ENCODE measurements at regions of chr11 and their contacts with region 1.

Region 1: DNA sequence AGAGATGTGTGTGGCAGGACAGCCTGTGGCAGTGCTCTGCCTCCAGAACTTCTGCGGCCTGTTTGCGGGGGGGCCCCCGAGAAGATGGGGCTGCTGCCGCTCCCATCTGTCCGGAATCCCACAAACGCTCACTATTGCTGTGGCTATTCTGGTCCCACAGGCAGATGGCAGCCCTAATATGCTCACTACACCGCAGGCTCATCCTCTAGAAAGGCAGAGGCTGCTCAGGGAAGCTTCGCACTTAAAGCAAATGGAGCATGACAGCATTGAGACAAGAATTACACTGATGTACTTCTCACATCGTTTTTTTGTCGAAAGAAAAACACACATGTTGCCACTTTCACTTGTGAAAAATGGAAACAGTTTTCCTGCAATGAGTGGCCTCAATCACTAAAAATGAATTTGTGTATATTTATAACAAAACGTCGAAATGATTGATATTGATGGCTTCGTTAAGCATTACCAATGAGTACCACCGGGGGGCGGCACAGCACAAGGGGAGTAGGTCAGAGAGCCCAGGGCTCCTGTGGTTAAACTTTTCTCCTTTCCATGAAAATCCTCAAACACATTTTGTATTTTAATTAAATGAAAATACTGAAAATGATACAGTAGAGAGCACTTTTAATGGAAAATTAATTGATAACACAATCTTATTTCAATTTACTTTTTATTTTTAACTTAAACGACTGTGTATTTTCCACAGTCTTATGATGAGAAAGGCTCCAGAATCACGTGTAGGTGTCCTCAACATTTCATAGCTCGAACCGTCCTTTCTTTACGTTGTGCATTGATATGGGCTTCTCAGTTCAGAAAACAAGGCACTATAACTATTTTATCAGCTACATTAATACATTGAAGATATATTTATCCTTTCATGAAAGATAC is 69.1 kb downstream of the CTTN start:
- DNase-seq: peak; percentile 80
- ATAC-seq: peak; percentile 47
- H3K4me3 Mint-ChIP-seq: no peak overlapping the region
- H3K27ac Mint-ChIP-seq: no peak overlapping the region
- H3K4me1 Mint-ChIP-seq: no peaks in the 10 kb centered on the region
- H3K27me3 Mint-ChIP-seq: peaks cover 2% of the 10 kb centered on the region

Region 2: DNA sequence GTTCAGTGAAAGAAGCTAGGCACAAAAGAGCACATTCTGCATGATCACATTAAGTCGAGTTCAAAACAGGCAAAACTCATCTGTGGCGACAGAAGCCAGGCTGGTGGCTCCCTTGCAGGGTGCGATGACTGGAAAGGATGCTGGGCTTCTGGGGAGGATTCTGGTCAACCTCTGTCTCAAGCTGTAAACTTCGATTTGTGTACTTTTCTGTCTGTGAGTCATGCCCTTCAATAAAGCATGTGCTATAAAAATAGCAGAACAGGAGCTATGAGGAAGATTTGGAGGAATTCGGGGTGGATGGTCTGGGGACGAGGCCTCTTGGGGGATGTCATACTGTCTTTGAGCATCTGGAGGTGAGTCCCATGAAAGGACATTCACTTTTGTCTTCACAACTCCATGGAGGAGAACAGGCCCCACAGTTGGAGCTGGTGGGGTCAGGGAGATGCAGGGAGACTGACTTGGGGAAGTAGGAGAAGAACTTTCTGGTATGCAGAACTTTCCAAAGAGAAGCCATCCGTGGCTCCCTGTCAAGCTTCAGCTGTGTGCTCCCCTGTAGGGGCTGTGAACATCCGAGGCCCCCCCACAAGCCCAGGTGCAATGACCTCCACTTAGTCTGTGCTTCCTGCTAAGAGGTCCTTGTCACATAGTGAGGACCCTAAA is 1063.8 kb before region 1 on chr11:
- CTCF ChIA-PET with region 1: no interaction called
- POLR2A ChIA-PET with region 1: no interaction called
- intact Hi-C with region 1: no loop called
- DNase-seq: no peak
- ATAC-seq: no peak
- H3K4me3 Mint-ChIP-seq: no peak overlapping the region
- H3K27ac Mint-ChIP-seq: no peak overlapping the region
- H3K4me1 Mint-ChIP-seq: peaks cover 10% of the 10 kb centered on the region
- H3K27me3 Mint-ChIP-seq: peaks cover 3% of the 10 kb centered on the region

Region 3: DNA sequence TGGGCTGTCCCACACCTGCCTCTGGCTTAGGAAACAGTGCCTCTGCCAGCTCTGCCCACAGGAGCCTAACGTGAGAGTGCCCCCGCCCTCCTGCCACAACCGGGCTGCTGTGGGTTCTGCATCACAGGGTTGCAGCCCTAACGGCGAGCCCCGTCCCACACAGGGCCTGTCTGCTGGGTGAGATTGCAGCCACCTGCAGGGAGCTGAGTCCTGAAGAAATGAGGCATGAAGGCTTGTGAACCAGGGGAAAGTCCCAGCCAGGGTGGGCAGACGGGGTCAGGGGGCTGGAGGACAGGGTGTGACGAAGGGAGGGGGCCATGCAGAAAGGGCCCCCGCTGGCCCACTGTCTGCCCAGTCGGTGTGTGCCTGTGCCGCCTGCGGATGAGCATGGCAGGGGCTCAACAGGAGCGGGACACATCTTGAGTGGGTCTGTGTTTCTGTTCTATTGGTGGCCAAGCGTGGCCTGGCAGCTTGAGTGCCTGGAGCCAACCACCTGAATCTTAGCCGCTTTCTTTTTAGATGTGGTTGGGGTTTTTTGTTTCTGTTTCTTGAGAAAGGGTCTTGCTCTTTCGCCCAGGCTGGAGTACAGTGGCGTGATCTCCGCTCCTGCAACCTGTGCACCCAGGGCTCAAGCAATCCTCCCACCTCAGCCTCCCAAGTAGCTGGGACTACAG is 30.2 kb before region 1 on chr11:
- CTCF ChIA-PET with region 1: no interaction called
- POLR2A ChIA-PET with region 1: no interaction called
- intact Hi-C with region 1: no loop called
- DNase-seq: no peak
- ATAC-seq: no peak
- H3K4me3 Mint-ChIP-seq: no peak overlapping the region
- H3K27ac Mint-ChIP-seq: no peak overlapping the region
- H3K4me1 Mint-ChIP-seq: no peaks in the 10 kb centered on the region
- H3K27me3 Mint-ChIP-seq: peaks cover 2% of the 10 kb centered on the region

Region 4: GRCh38 chr11:70501051-70501901 is 33.8 kb after region 1 on chr11:
- CTCF ChIA-PET with region 1: no interaction called
- POLR2A ChIA-PET with region 1: no interaction called
- intact Hi-C with region 1: no loop called
- DNase-seq: no peak
- ATAC-seq: no peak
- H3K4me3 Mint-ChIP-seq: no peak overlapping the region
- H3K27ac Mint-ChIP-seq: no peak overlapping the region
- H3K4me1 Mint-ChIP-seq: no peaks in the 10 kb centered on the region
- H3K27me3 Mint-ChIP-seq: no peaks in the 10 kb centered on the region

Region 5: DNA sequence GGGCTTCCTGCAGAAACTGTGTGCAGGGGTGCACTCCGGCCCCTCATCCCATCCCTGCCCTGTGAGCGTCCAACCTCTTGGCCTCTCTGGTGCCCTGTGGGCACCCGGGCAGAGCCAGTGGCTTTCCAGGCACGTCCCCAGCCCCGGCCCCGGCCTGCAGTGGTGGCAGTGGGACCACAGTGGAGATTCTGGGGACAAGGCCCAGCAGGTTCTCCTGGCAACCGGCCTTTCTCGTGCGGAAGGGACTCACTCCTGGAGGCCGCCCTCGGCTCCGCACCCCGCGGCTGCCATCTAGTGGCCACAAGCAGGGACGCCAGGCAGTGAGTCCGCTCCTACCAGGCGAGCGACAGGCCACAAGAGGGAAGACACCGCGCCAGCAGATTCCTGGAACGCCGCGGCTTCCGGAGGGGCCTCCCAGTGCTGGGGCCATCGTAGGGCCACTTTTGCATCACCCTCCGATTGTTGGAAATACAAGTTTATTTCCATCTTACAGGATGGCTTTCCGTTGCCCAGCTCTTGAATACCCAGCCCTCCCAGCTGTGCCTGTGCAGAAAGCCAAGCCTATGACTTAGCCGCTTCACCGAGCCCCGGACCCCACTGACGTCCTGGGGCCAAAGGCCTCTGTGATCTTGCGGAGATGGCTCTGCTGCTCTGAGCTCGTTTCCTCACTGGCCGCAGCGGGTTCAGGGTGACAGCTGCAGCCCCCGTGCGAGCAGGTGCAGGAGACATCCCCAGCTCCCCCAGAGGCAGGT is 288.1 kb after region 1 on chr11:
- CTCF ChIA-PET with region 1: interaction called, 5 read pairs
- POLR2A ChIA-PET with region 1: no interaction called
- intact Hi-C with region 1: loop called (anchors 1 kb)
- DNase-seq: peak; percentile 84
- ATAC-seq: peak; percentile 91
- H3K4me3 Mint-ChIP-seq: no peak overlapping the region
- H3K27ac Mint-ChIP-seq: no peak overlapping the region
- H3K4me1 Mint-ChIP-seq: no peaks in the 10 kb centered on the region
- H3K27me3 Mint-ChIP-seq: peaks cover 2% of the 10 kb centered on the region

Region 6: DNA sequence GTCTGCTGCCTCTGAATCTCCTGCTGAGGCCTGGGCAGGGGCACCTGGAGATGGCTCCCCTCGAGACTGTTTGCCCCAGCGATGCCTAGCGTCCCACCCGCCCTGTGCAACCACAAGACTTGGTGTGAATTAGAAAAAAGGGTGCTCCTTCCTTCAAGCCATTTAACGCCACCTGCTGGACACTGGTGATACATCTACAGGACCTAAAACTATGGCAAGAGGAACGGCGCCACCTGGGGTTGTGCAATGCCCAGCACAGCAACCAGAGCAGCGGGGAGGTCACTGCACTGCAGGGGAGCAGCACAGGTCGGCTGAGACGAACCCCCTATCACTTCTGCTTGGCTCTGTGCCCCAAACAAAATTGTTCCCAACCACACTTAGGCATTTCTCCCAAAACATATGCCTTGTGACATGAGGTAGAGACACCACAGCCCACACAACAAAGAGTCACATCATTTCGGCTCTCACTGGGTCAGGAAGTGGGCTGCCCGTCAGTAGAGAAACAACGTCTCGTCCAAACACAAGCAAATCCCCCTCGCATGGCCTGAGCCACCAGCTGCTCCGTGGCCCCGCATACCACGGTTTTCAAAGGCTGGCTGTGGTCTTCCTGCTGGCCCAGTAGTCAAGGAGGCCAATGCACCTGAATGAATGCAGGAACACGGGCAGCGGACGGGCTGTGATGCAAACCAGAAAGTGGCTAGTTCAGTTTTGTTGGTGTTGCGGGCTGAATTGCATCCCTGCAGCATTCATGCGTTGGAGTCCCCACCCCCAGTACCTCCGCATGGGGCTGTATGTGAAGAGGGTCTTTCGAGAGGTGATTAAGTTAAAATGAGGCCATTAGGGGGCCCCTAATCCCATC is 613.0 kb after region 1 on chr11:
- CTCF ChIA-PET with region 1: no interaction called
- POLR2A ChIA-PET with region 1: no interaction called
- intact Hi-C with region 1: loop called in 1 of 2 experiments (anchors 1 kb)
- DNase-seq: peak; percentile 82
- ATAC-seq: peak; percentile 68
- H3K4me3 Mint-ChIP-seq: no peak overlapping the region
- H3K27ac Mint-ChIP-seq: no peak overlapping the region
- H3K4me1 Mint-ChIP-seq: no peaks in the 10 kb centered on the region
- H3K27me3 Mint-ChIP-seq: peaks cover 8% of the 10 kb centered on the region

Measured in activated CD4-positive, alpha-beta T cell treated with anti-CD3 and anti-CD28 coated beads for 36 hours (primary cell).